ENCODE measurements at regions of chr10 and their contacts with region 1.

Region 1: DNA sequence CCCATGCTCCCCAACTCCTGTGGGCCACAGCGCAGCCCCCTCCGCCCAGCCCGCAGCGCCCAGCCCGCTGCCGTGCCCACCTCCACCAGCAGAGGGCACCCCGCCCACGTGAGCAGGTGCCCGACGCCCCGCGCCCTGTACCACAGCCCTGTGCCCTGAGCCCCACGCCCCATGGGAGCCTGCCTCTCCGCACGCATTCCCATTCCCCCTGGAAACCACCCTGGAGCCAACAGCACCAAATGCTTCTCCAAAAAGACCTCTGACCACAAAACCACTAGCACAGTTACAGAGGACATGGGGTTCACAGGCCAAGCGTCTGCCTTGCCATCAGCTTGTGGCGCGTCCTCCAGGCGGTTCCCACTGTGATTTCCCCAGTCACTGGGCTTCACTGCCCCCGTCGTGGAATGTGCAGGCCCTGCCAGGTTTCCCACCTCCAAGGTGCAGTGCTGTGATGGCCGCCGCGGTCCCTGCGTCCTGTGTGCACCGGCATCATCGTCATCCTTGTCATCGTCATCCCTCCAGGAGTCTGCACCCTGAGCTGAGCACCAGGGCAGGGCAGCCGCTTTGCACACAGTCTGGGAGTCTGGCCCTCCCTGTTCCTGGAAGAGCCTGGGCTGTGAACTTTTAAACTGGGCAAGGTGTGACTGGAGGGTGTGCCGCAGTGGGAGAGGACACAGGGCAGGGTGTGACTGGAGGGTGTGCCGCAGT is 61.7 kb downstream of the PWWP2B start:
- DNase-seq: peak; percentile 62 to 81
- ATAC-seq: peak; percentile 78 to 86 (median 80)
- H3K4me3 ChIP-seq: no peak overlapping the region
- H3K27ac ChIP-seq: no peak overlapping the region
- H3K4me1 ChIP-seq: peaks cover 10% of the 10 kb centered on the region
- H3K27me3 ChIP-seq: peaks cover 0 to 4% (median 0%) of the 10 kb centered on the region in 3 donors
- CTCF ChIP-seq: peak; percentile 93

Region 2: GRCh38 chr10:132023092-132023811 is 435.5 kb before region 1 on chr10:
- intact Hi-C with region 1: no loop called
- DNase-seq: peak; percentile 84 to 92
- ATAC-seq: peak; percentile 93 to 99 (median 96)
- H3K4me3 ChIP-seq: peak overlapping the region; percentile 63
- H3K27ac ChIP-seq: no peak overlapping the region
- H3K4me1 ChIP-seq: no peaks in the 10 kb centered on the region
- H3K27me3 ChIP-seq: peaks cover 0 to 22% (median 0%) of the 10 kb centered on the region in 3 donors
- CTCF ChIP-seq: peak; percentile 94

Region 3: DNA sequence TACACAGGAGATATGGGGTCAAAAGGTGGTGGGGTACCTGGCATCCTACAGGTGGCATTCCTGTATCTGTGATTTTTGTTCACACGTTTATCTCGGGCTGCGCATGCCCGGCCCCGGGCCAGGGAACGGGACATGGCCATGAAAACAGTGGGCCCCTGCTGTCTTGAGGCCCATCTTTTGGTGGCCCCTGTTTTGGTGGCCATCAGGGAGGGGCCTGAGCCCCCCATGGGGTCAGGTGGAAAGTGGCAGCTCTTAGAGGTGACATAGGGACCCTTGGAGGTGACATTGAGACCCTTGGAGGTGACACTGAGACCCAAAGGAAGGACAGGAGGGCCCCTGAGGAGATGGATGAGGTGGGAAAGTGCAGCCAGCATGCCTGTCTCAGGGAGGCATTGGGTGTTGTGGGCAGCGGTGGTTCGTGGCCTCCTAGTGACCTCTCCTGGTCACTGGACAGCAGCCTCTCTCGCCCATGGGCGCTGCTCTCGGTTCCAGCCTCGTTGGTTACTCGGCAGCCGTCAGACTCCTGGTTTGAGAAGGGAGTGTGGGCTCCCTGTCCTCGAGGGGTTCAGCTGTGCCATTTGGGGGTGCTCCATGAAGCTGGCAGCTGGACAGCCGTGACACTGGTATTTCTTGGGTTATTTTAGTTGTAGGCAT is 118.7 kb after region 1 on chr10:
- intact Hi-C with region 1: loop called (anchors 1 to 5 kb)
- DNase-seq: peak in 1 of 2 donors; percentile 79
- ATAC-seq: peak; percentile 87 to 93 (median 93)
- H3K4me3 ChIP-seq: no peak overlapping the region
- H3K27ac ChIP-seq: no peak overlapping the region
- H3K4me1 ChIP-seq: peaks cover 33% of the 10 kb centered on the region
- H3K27me3 ChIP-seq: no peaks in the 10 kb centered on the region
- CTCF ChIP-seq: peak; percentile 61

Measured in psoas muscle (tissue), 8 donors.